GM10248 (cell line): ENCODE measurements at regions of chr20 and their contacts with region 1.

Region 1: GRCh38 chr20:354298-355064 is 7.6 kb downstream of the NRSN2 start:
- DNase-seq: peak; percentile 91
- CTCF ChIP-seq: peak; percentile 95

Region 2: DNA sequence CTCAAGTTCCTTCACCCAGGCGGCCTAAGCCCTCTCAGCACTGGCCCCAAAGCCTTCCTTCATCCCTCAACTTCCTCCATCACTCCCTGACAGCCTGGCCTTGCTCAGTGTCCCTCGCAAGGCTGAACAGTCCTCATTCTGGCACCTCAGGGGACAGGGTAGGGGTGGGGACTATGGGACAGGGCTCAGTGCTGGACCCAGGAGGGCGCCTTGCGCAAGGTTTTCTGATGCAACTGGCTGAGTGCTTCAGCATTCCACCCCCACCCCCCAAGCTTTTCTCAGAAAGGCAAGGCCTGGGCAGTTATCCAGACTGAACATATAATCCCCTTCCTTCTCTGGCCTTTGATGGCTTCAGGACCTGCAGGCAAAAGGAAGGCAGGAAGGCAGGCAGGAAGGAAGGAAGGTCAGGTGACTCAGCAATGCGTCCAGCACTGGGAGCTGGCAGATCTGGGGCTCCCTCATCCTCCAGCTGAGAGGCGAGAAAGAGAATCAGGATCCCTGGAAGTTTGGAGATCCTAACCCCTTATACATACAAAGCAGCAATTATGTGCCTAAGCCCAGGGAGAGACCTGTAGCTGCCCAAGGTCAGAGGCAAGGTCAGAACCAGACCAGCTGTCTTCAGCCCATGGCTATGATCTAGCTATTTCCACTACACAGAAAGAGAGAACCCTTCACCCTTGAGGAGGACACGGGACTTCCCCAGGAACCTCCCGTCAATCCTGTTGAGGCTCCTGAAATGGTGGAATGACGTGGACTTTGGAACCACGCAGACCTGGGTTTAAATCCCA is 17.5 kb after region 1 on chr20:
- CTCF ChIA-PET with region 1: interaction called, 74 read pairs
- POLR2A ChIA-PET with region 1: interaction called, 4 read pairs
- DNase-seq: no peak
- CTCF ChIP-seq: no peak

Region 3: GRCh38 chr20:431012-431904 is 76.8 kb after region 1 on chr20:
- CTCF ChIA-PET with region 1: interaction called, 15 read pairs
- POLR2A ChIA-PET with region 1: no interaction called
- DNase-seq: peak; percentile 27
- CTCF ChIP-seq: peak; percentile 40

Region 4: GRCh38 chr20:461254-462198 is 107.0 kb after region 1 on chr20:
- CTCF ChIA-PET with region 1: no interaction called
- POLR2A ChIA-PET with region 1: no interaction called
- DNase-seq: peak; percentile 71
- CTCF ChIP-seq: no peak

Region 5: GRCh38 chr20:478949-479429 is 124.5 kb after region 1 on chr20:
- CTCF ChIA-PET with region 1: interaction called, 79 read pairs
- POLR2A ChIA-PET with region 1: no interaction called
- DNase-seq: peak; percentile 65
- CTCF ChIP-seq: peak; percentile 49